ENCODE measurements at regions of chr5 and their contacts with region 1.

Region 1: DNA sequence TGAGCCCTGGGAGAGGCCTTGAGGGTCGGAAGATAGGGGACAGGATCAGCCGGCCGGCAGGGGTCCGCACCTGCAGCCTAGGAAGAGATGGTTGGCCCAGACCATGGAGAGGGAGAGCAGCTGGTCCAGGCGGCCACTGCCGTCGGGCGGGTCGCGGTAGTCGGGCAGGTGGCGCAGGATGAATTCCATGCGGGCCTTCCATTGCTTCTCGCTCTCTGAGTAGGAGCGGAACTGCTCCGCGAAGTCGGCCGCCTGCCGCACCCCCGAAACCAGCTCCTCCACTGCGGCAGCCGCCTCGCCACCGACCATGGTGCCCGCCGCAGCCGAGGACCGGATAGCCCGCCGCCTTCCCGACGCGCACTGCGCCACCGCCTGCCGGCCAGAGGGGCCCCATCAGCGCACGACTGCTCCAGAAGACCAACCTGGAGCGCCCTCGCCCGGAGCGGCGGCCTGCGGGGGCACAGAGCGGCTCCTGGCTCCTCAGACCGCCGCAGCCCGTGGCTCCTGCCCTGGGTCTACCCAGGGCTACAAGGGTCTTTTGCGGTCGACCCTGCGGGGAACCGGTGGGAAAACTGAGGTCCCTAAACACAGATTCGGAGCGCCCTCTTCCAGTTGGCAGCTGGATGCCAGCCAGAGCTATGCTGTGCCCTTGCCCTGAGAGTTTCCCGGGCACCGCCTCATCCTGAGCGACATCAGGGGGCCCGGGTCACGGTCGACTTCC is at the start of gene CDKN2AIPNL:
- DNase-seq: peak; percentile 92 to 94
- ATAC-seq: peak; percentile 99 to 100 (median 100)
- H3K4me3 ChIP-seq: peak within 1 kb of the TSS; percentile 63 to 98 (median 80)
- H3K27ac ChIP-seq: peak within 1 kb of the TSS; percentile 69 to 91 (median 86)
- H3K4me1 ChIP-seq: peaks cover 3 to 39% (median 32%) of the 10 kb centered on the region in 9 donors
- H3K27me3 ChIP-seq: no peaks in the 10 kb centered on the region
- CTCF ChIP-seq: peak; percentile 66 to 95 (median 83)
- total RNA-seq, gene CDKN2AIPNL: 29.1 to 39.8 (median 37.3) TPM

Region 2: DNA sequence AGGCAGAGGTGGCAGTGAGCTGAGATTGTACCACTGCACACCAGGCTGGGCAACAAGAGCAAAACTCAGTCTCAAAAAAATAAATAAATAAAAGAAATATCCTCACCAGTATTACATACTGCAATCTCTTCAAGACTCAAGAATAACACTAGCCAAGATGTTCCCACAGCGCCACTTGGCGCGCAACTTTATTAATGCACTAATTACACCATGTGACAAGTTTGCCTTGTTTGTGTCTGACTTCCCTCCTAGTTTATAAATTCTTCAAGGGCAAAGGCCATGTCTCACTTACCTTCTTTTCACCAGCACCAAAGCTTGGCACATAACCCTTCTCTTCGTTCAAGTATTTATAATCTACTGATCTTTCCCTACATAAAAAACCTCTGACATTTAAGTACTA is 239.7 kb before region 1 on chr5:
- intact Hi-C with region 1: no loop called
- DNase-seq: no peak
- ATAC-seq: no peak
- H3K4me3 ChIP-seq: no peak overlapping the region
- H3K27ac ChIP-seq: no peak overlapping the region
- H3K4me1 ChIP-seq: peaks cover 5 to 72% (median 46%) of the 10 kb centered on the region in 9 donors
- H3K27me3 ChIP-seq: no peaks in the 10 kb centered on the region
- CTCF ChIP-seq: no peak

Region 3: GRCh38 chr5:134436523-134437339 is 25.0 kb after region 1 on chr5:
- intact Hi-C with region 1: loop called in 2 of 10 experiments (anchors 2 kb)
- DNase-seq: peak; percentile 52 to 70
- ATAC-seq: peak; percentile 51 to 89 (median 81)
- H3K4me3 ChIP-seq: peak overlapping the region in 3 of 10 donors; percentile 20 to 24 (median 23)
- H3K27ac ChIP-seq: peak overlapping the region; percentile 65 to 91 (median 80)
- H3K4me1 ChIP-seq: peaks cover 25 to 41% (median 38%) of the 10 kb centered on the region in 9 donors
- H3K27me3 ChIP-seq: no peaks in the 10 kb centered on the region
- CTCF ChIP-seq: no peak

Region 4: GRCh38 chr5:134477462-134478250 is 66.0 kb after region 1 on chr5:
- intact Hi-C with region 1: loop called in 1 of 10 experiments (anchors 10 kb)
- DNase-seq: no peak
- ATAC-seq: no peak
- H3K4me3 ChIP-seq: no peak overlapping the region
- H3K27ac ChIP-seq: no peak overlapping the region
- H3K4me1 ChIP-seq: no peaks in the 10 kb centered on the region
- H3K27me3 ChIP-seq: no peaks in the 10 kb centered on the region
- CTCF ChIP-seq: no peak

Region 5: GRCh38 chr5:134511788-134512650 is 100.3 kb after region 1 on chr5:
- intact Hi-C with region 1: loop called in 3 of 10 experiments (anchors 5 kb)
- DNase-seq: peak; percentile 71 to 74
- ATAC-seq: peak; percentile 77 to 92 (median 88)
- H3K4me3 ChIP-seq: no peak overlapping the region
- H3K27ac ChIP-seq: peak overlapping the region in 9 of 10 donors; percentile 19 to 79 (median 60)
- H3K4me1 ChIP-seq: peaks cover 4 to 21% (median 17%) of the 10 kb centered on the region in 9 donors
- H3K27me3 ChIP-seq: no peaks in the 10 kb centered on the region
- CTCF ChIP-seq: peak in 7 of 9 donors; percentile 14 to 46 (median 38)

Region 6: DNA sequence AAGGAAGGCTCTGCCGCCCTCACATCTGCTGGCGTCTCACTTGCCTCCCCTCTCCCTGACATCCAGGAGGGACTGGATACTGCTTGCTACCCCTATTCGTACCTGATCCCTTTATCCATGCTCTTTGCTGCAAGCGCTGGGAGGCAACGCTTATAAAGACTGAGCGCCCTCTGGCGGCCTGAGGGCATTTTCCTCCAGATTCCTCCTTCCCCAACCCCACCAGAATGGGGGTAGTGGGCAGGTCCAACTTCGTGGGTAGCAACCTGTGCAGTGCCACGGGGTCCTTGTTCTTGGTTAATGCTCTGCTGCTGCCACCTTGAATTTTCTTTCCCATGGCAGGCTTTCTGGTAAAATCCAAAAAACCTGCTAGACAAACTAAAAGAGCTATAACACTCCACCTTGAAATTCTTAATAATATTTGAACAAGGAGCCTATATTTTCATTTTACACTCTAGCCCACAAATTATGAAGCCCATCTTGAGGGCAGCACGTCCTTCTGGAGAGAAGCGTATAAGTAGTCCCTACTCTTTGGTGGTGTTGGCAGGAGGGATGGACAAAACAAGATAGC is 166.2 kb after region 1 on chr5:
- intact Hi-C with region 1: loop called (anchors 2 to 10 kb)
- DNase-seq: peak; percentile 74 to 85
- ATAC-seq: peak in 7 of 8 donors; percentile 36 to 65 (median 52)
- H3K4me3 ChIP-seq: no peak overlapping the region
- H3K27ac ChIP-seq: peak overlapping the region in 2 of 10 donors; percentile 41 to 48
- H3K4me1 ChIP-seq: peaks cover 16 to 63% (median 42%) of the 10 kb centered on the region in 9 donors
- H3K27me3 ChIP-seq: no peaks in the 10 kb centered on the region
- CTCF ChIP-seq: peak; percentile 65 to 91 (median 86)